IMR-90 (cell line): ENCODE measurements at regions of chr2 and their contacts with region 1.

Region 1: DNA sequence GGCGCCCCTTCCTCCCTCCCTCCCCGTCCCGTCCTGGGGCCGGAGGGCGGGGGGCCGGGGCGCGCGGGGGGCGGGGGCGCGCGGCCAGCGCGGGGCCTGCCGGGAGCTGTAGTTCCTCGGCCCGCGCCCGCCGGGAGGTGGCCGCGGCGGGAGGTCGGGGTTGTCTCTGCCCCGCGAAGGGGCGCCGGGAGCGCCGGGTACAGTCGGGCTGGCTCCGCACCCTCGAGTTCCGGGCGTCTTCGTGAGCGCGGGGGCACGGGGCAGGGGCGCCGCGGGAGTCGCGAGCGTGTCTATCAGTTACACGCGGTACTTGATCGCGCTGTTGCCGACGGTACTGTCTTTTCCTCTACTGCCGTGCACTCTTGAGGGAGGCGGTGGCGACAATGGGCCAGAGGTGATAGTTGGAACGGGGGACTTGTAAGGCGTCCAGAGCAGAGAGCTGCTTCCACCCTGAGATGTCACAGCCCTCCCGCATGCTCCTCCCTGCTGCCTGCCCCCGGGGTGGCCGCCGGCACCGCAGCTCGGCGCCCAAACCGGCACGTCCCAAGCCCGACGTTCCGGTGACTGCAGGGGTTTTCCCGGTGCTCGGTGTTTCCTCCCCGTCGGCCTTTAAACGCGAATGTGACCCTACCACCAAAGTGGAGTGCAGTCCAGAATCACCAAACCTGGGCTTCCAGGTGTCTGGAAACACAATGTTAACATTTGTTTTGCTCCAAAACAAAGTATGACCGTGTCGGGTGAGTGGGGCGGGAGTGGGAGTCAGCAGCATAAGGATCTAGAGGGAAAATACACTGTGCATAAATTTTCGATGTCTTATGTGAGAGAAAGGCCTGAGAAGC is at the start of gene PRKD3:
- DNase-seq: peak; percentile 39
- ATAC-seq: peak; percentile 89
- H3K4me3 ChIP-seq: peak within 1 kb of the TSS; percentile 75
- H3K27ac ChIP-seq: peak within 1 kb of the TSS; percentile 71
- H3K4me1 ChIP-seq: peaks cover 4% of the 10 kb centered on the region
- H3K27me3 ChIP-seq: no peaks in the 10 kb centered on the region
- CTCF ChIP-seq: no peak
- POLR2A ChIP-seq: no peak
- RAD21 ChIP-seq: no peak
- total RNA-seq, gene PRKD3: 46.4 and 47.5 TPM in 2 replicates

Region 2: DNA sequence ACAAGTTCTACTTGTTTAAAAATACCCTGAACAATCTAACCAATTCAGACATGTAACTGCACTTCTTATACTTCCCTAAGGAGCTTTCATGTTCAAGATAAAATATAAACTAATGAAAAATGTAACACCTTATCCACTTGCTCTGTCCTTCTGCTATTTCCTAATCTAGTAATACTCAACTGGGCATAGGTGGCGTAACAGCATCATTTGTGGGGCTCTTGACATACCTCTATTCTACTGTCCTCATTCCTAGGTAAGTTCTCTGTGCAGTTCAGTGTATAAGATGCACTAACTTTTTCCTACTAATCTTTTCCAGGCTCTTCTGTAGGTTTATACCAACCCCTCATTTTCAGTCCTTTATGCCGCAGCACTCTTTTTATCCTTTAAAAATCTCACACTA is 37.0 kb before region 1 on chr2:
- CTCF ChIA-PET with region 1: no interaction called
- POLR2A ChIA-PET with region 1: no interaction called
- dilution Hi-C with region 1: no loop called
- in situ Hi-C with region 1: no loop called
- intact Hi-C with region 1: loop called (anchors 5 kb)
- DNase-seq: no peak
- ATAC-seq: no peak
- H3K4me3 ChIP-seq: no peak overlapping the region
- H3K27ac ChIP-seq: no peak overlapping the region
- H3K4me1 ChIP-seq: peaks cover 6% of the 10 kb centered on the region
- H3K27me3 ChIP-seq: no peaks in the 10 kb centered on the region
- CTCF ChIP-seq: no peak
- POLR2A ChIP-seq: no peak
- RAD21 ChIP-seq: 0 out of 2 replicates have a peak, but pooled peaks have one; percentile 12

Region 3: GRCh38 chr2:37389989-37390765 is 65.2 kb after region 1 on chr2:
- CTCF ChIA-PET with region 1: no interaction called
- POLR2A ChIA-PET with region 1: no interaction called
- dilution Hi-C with region 1: no loop called
- in situ Hi-C with region 1: no loop called
- intact Hi-C with region 1: loop called (anchors 2 kb)
- DNase-seq: peak; percentile 96
- ATAC-seq: peak; percentile 60
- H3K4me3 ChIP-seq: no peak overlapping the region
- H3K27ac ChIP-seq: peak overlapping the region; percentile 26
- H3K4me1 ChIP-seq: peaks cover 27% of the 10 kb centered on the region
- H3K27me3 ChIP-seq: no peaks in the 10 kb centered on the region
- CTCF ChIP-seq: no peak
- POLR2A ChIP-seq: 0 out of 2 replicates have a peak, but pooled peaks have one; percentile 25
- RAD21 ChIP-seq: no peak

Region 4: DNA sequence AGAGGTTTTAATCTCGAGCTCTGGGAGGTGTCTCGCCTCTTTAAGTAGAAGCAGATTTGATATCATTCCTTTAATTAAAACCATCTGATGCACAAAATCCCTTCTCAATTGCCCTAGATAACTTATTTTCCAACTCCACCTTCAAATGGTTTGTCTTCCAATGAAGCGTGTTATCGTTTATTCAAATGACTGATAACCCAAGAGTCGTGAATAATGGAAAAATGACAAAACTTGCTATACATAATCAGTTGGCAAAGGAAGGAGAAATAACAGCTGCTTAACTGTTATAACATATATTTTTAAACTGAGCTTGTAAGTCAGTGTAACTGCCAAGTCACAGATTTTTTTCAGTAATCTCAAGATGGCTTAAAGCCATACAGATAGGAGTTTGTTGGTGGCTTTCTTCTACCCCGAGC is 164.0 kb after region 1 on chr2:
- CTCF ChIA-PET with region 1: no interaction called
- POLR2A ChIA-PET with region 1: no interaction called
- dilution Hi-C with region 1: no loop called
- in situ Hi-C with region 1: no loop called
- intact Hi-C with region 1: no loop called
- DNase-seq: peak; percentile 12
- ATAC-seq: no peak
- H3K4me3 ChIP-seq: no peak overlapping the region
- H3K27ac ChIP-seq: no peak overlapping the region; the same call in 1 of the 2 replicates
- H3K4me1 ChIP-seq: no peaks in the 10 kb centered on the region; the same call in 1 of the 2 replicates
- H3K27me3 ChIP-seq: peaks cover 4% of the 10 kb centered on the region
- CTCF ChIP-seq: no peak
- POLR2A ChIP-seq: no peak
- RAD21 ChIP-seq: no peak